ENCODE measurements at regions of chr10 and their contacts with region 1.

Region 1: GRCh38 chr10:110864662-110865140 is 7.0 kb upstream of the PDCD4 start:
- DNase-seq: peak; percentile 69
- H3K4me3 Mint-ChIP-seq: peak overlapping the region; percentile 75
- H3K27ac Mint-ChIP-seq: peak overlapping the region; percentile 95
- H3K4me1 Mint-ChIP-seq: peaks cover 96% of the 10 kb centered on the region
- H3K27me3 Mint-ChIP-seq: no peaks in the 10 kb centered on the region

Region 2: GRCh38 chr10:110843031-110843430 is 21.7 kb before region 1 on chr10:
- intact Hi-C with region 1: loop called (anchors 1 kb)
- DNase-seq: peak; percentile 66
- H3K4me3 Mint-ChIP-seq: peak overlapping the region; percentile 60
- H3K27ac Mint-ChIP-seq: peak overlapping the region; percentile 86
- H3K4me1 Mint-ChIP-seq: peaks cover 69% of the 10 kb centered on the region
- H3K27me3 Mint-ChIP-seq: no peaks in the 10 kb centered on the region

Region 3: GRCh38 chr10:110852255-110852896 is 12.3 kb before region 1 on chr10:
- intact Hi-C with region 1: loop called (anchors 1 kb)
- DNase-seq: no peak
- H3K4me3 Mint-ChIP-seq: peak overlapping the region; percentile 1
- H3K27ac Mint-ChIP-seq: peak overlapping the region; percentile 34
- H3K4me1 Mint-ChIP-seq: peaks cover 68% of the 10 kb centered on the region
- H3K27me3 Mint-ChIP-seq: no peaks in the 10 kb centered on the region